Activated T-helper 1 cell treated with anti-CD3 and anti-CD28 coated beads, Interleukin-12 subunit alpha, Interleukin-12 subunit beta, Interleukin-2, Interleukin-4 antibody, amounts not matched to agents 30 ng/mL and 10 ng/mL and 1 ng/mL, durations not matched to agents 14 hours and 24 hours and 36 hours (primary cell): ENCODE measurements at regions of chr3 and their contacts with region 1.

Region 1: GRCh38 chr3:50337191-50337841 is 3.3 kb downstream of the RASSF1 start:
- DNase-seq: peak; percentile 96
- H3K4me3 Mint-ChIP-seq: peak overlapping the region; percentile 96
- H3K27ac Mint-ChIP-seq: peak overlapping the region; percentile 97
- H3K4me1 Mint-ChIP-seq: peaks cover 51% of the 10 kb centered on the region
- H3K27me3 Mint-ChIP-seq: no peaks in the 10 kb centered on the region

Region 2: DNA sequence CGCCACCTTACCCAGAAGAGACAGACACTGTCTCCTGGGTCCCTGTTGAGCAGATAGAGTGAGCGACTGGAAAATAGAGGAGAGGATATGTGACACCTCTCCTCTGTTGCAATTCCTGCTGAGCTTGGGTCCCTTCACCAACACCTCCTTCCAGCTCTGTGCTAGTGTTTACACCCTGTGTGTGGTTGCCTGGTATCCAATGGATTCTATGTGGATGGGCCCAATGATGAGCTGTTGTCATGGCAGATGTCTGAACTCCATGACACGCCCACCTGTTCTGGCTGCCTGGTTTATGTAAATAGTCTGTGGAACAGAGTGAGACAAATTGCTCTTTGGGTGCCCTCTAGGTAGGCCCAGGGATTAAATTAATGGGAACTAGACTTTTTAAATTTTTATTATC is 224.9 kb before region 1 on chr3:
- intact Hi-C with region 1: no loop called
- DNase-seq: no peak
- H3K4me3 Mint-ChIP-seq: no peak overlapping the region
- H3K27ac Mint-ChIP-seq: no peak overlapping the region
- H3K4me1 Mint-ChIP-seq: peaks cover 9% of the 10 kb centered on the region
- H3K27me3 Mint-ChIP-seq: no peaks in the 10 kb centered on the region

Region 3: GRCh38 chr3:50235716-50236496 is 101.4 kb before region 1 on chr3 and contains the start of gene GNAI2:
- intact Hi-C with region 1: loop called (anchors 1 kb)
- DNase-seq: peak; percentile 99
- H3K4me3 Mint-ChIP-seq: peak within 1 kb of the TSS; percentile 99
- H3K27ac Mint-ChIP-seq: peak within 1 kb of the TSS; percentile 94
- H3K4me1 Mint-ChIP-seq: peaks cover 32% of the 10 kb centered on the region
- H3K27me3 Mint-ChIP-seq: no peaks in the 10 kb centered on the region
- total RNA-seq, gene GNAI2: 237 and 238 TPM in 2 replicates

Region 4: GRCh38 chr3:50321336-50322114 is 15.8 kb before region 1 on chr3:
- intact Hi-C with region 1: loop called (anchors 1 kb)
- DNase-seq: peak; percentile 81
- H3K4me3 Mint-ChIP-seq: peak overlapping the region; percentile 79
- H3K27ac Mint-ChIP-seq: peak overlapping the region; percentile 83
- H3K4me1 Mint-ChIP-seq: peaks cover 35% of the 10 kb centered on the region
- H3K27me3 Mint-ChIP-seq: no peaks in the 10 kb centered on the region

Region 5: DNA sequence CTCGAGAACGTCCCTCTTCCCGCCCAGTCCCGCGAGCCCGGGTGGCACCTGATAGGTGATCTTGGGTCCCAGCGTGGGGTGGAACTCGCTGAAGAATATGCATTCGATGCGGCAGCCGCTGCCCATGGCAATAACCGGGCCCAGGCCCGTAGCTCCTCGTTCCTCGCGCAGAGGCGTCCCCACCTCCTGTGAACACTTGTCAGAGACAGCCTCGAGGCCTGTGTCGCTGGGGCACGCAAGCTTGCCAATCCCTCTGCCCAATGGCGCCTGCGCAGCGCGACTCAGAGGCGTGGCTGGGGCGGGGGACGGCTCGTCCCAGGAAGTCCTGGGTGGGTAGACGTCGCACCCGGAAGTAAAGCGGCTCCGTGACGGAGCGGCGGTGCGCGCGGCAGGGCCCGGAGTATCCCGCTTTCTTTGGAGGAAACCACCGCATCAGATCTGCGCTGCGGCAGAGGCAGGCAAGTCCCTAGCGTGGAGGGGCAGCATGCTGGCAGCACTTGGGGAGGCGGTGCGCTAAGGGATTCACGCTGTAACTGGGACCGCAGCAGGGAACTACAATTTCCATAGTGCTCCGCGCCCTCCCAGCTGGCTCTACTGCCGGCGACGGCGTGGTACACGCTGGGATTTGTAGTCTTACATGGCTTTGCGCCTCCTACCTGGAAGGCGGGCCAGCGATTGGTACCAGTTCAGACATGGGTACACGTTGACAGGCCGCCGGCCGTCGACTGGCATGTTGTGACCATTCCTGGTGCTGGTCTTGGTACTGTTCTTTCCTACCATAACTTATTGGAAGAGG is 13.4 kb after region 1 on chr3 and contains the starts of genes CYB561D2 and NPRL2:
- intact Hi-C with region 1: loop called (anchors 1 kb)
- DNase-seq: peak; percentile 100
- H3K4me3 Mint-ChIP-seq: peak within 1 kb of the TSS; percentile 95
- H3K27ac Mint-ChIP-seq: peak within 1 kb of the TSS; percentile 95
- H3K4me1 Mint-ChIP-seq: peaks cover 55% of the 10 kb centered on the region
- H3K27me3 Mint-ChIP-seq: no peaks in the 10 kb centered on the region
- total RNA-seq, gene CYB561D2: 30.0 and 35.9 TPM in 2 replicates
- total RNA-seq, gene NPRL2: 43.7 and 46.6 TPM in 2 replicates

Region 6: DNA sequence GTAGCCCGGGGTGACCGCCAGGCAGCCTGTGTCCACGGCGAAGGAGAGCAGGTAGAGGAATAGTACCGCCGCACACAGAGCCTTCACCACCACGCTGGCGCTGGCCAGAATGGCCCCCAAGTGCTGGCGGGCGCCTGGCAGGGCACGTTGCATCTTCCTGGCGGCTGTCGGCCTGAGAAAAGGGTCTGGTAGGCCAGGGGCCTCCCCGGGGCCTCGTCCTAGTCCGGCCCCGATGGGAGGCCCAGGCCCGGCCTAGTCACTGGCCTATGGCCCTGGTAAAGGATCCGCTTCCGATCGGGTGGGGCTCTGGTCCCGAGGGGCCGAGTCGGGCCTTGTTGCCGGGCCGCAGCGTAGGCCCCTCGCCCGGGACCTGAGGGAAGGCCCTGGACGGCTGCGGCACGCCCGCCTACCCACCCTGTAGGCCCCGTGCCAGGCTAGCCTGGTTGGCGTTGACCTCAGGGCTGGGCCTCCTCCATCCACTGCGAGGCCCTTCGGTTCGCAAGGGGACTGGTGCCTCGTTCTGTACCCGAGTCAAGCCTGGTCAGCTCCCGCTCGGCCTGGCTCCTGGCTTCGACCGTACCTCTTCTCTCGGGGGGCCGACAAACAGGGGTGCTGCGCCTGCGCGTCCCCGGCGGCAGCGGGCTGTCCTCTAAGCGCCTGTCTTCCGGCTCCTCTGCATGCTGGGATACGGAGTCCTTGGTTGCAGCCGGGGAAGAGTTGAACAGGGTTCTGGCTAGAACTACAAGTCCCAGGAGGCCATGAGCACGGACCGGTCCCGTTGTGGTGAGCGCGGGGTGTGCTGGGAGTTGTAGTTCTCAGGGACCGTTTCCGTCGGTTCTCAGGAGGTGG is 21.8 kb after region 1 on chr3 and contains the start of gene TMEM115:
- intact Hi-C with region 1: loop called (anchors 1 kb)
- DNase-seq: peak; percentile 95
- H3K4me3 Mint-ChIP-seq: peak within 1 kb of the TSS; percentile 99
- H3K27ac Mint-ChIP-seq: peak within 1 kb of the TSS; percentile 96
- H3K4me1 Mint-ChIP-seq: peaks cover 43% of the 10 kb centered on the region
- H3K27me3 Mint-ChIP-seq: peaks cover 4% of the 10 kb centered on the region
- total RNA-seq, gene TMEM115: 23.6 and 25.4 TPM in 2 replicates